ENCODE measurements at regions of chr10 and their contacts with region 1.

Region 1: GRCh38 chr10:84194424-84195040 is at the start of gene CDHR1:
- DNase-seq: no peak
- H3K4me3 ChIP-seq: peak within 1 kb of the TSS in 1 of 3 experiments; percentile 20
- H3K4me3 Mint-ChIP-seq: peak within 1 kb of the TSS in 1 of 2 donors; percentile 72
- H3K27ac ChIP-seq: no peak within 1 kb of the TSS
- H3K27ac Mint-ChIP-seq: no peak within 1 kb of the TSS
- H3K4me1 ChIP-seq: no peaks in the 10 kb centered on the region
- H3K4me1 Mint-ChIP-seq: no peaks in the 10 kb centered on the region
- H3K27me3 ChIP-seq: peaks cover 33 to 50% of the 10 kb centered on the region in 2 donors
- H3K27me3 Mint-ChIP-seq: peaks cover 37 to 59% (median 41%) of the 10 kb centered on the region in 3 donors
- CTCF ChIP-seq: no peak
- polyA plus RNA-seq, gene CDHR1: not detected

Region 2: GRCh38 chr10:84152769-84153168 is 41.8 kb before region 1 on chr10:
- intact Hi-C with region 1: loop called in 1 of 2 experiments (anchors 5 kb)
- DNase-seq: no peak
- H3K4me3 ChIP-seq: no peak overlapping the region
- H3K4me3 Mint-ChIP-seq: no peak overlapping the region
- H3K27ac ChIP-seq: no peak overlapping the region
- H3K27ac Mint-ChIP-seq: no peak overlapping the region
- H3K4me1 ChIP-seq: peaks cover 7 to 9% of the 10 kb centered on the region in 2 donors
- H3K4me1 Mint-ChIP-seq: peaks cover 11% of the 10 kb centered on the region
- H3K27me3 ChIP-seq: no peaks in the 10 kb centered on the region
- H3K27me3 Mint-ChIP-seq: peaks cover 0 to 3% (median 0%) of the 10 kb centered on the region in 3 donors
- CTCF ChIP-seq: no peak

Region 3: GRCh38 chr10:84499846-84500245 is 305.3 kb after region 1 on chr10:
- intact Hi-C with region 1: no loop called
- DNase-seq: no peak
- H3K4me3 ChIP-seq: no peak overlapping the region
- H3K4me3 Mint-ChIP-seq: peak overlapping the region in 1 of 2 donors; percentile 26
- H3K27ac ChIP-seq: no peak overlapping the region
- H3K27ac Mint-ChIP-seq: peak overlapping the region in 2 of 7 donors; percentile 19 to 60
- H3K4me1 ChIP-seq: no peaks in the 10 kb centered on the region
- H3K4me1 Mint-ChIP-seq: peaks cover 9% of the 10 kb centered on the region
- H3K27me3 ChIP-seq: no peaks in the 10 kb centered on the region
- H3K27me3 Mint-ChIP-seq: no peaks in the 10 kb centered on the region
- CTCF ChIP-seq: no peak